Calu3 (cell line): ENCODE measurements at regions of chrX and their contacts with region 1.

Region 1: GRCh38 chrX:134377537-134377936 is 82.4 kb upstream of the HPRT1 start:
- DNase-seq: peak; percentile 21
- H3K4me3 Mint-ChIP-seq: no peak overlapping the region
- H3K27ac Mint-ChIP-seq: no peak overlapping the region
- H3K4me1 Mint-ChIP-seq: no peaks in the 10 kb centered on the region
- H3K27me3 Mint-ChIP-seq: no peaks in the 10 kb centered on the region
- CTCF ChIP-seq: no peak

Region 2: GRCh38 chrX:134287346-134287745 is 90.2 kb before region 1 on chrX:
- CTCF ChIA-PET with region 1: no interaction called
- intact Hi-C with region 1: no loop called
- DNase-seq: no peak
- H3K4me3 Mint-ChIP-seq: no peak overlapping the region
- H3K27ac Mint-ChIP-seq: no peak overlapping the region
- H3K4me1 Mint-ChIP-seq: no peaks in the 10 kb centered on the region
- H3K27me3 Mint-ChIP-seq: no peaks in the 10 kb centered on the region
- CTCF ChIP-seq: no peak

Region 3: DNA sequence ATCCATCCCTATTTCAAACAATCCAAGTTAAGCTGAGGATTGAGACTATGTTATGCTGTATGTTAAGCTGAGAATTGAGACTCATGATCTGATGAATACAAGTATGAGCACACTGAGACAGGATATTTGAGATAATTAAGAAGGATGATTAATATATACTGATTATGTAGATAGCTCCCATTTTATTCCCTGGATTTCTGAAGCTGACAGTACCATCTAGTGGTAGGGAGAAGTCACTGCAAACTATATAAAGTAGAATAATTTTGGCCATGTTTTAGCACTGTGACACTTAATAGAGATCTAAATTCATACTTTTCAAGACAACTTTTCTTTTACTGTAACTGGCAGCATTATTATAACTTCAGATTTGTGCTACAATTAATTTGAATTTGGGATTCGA is 18.6 kb after region 1 on chrX:
- CTCF ChIA-PET with region 1: no interaction called
- intact Hi-C with region 1: loop called (anchors 2 kb)
- DNase-seq: no peak
- H3K4me3 Mint-ChIP-seq: no peak overlapping the region
- H3K27ac Mint-ChIP-seq: peak overlapping the region; percentile 25
- H3K4me1 Mint-ChIP-seq: no peaks in the 10 kb centered on the region
- H3K27me3 Mint-ChIP-seq: no peaks in the 10 kb centered on the region
- CTCF ChIP-seq: no peak

Region 4: DNA sequence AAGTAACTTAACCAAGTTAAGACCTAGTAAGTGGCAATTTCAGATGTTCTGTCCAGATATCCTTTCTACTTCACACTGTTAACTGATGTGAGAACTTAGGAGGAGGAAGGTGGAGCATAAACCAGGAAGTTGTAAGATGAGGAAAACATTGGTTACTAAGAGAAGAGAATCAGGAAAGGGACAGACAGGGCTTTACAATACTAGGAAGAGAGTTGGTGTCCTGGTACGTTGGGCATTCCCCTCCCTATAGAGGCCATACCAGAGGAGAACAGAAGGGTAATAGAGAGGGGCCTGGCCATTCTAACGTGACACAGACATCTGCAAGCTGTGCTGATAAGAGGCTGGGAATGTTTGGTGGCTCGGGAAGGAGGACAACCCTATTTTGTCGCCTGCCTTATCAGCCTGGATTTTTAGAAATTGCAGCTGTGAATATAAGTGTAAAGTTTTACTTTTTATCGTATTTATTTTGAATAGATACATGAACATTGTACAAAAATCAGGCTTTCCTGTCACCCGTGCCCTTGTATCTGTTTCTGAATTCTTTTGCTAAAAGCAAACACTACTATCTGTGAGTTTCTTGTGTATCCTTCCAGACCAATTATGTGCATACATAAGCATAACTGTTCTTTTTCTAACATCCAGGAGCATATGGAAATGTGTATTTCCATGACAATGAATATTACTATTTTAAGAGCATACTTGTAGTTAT is 29.0 kb after region 1 on chrX:
- CTCF ChIA-PET with region 1: no interaction called
- intact Hi-C with region 1: loop called (anchors 5 kb)
- DNase-seq: no peak
- H3K4me3 Mint-ChIP-seq: no peak overlapping the region
- H3K27ac Mint-ChIP-seq: peak overlapping the region; percentile 37
- H3K4me1 Mint-ChIP-seq: peaks cover 9% of the 10 kb centered on the region
- H3K27me3 Mint-ChIP-seq: no peaks in the 10 kb centered on the region
- CTCF ChIP-seq: no peak